CD8-positive, alpha-beta memory T cell (primary cell): ENCODE measurements at regions of chr2 and their contacts with region 1.

Region 1: DNA sequence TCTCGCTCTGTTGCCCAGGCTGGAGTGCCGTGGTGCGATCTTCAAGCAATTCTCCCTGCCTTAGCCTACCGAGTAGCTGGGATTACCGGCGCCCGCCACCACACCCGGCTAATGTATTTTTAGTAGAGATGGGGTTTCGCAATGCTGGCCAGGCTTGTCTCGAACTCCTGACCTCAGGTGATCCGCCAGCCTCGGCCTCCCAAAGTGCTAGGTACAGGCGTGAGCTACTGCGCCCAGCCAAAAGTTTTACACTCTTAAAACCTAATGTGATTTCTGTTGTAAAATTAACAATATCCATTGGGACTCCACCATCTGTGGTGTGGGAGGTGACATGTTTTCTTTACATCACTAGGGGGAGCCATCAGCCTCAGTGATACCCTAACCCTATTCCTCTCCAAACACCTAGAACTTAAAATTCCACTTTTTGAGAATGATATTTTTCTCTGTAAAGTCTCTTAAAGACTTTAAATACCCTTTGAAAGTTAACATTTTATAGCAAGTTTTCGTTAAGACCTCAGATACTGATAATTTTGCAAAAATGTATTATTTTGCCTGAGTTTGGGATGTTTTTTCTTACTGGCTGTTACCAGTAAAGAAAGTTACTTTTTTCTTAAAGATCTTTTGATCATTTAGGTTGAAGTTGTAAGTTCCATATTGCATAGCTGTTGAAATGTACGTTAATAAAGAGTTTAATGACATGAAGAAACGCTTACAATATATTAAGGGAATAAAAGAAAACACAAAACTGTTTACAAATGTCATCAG is 11.6 kb upstream of the EIF2AK2 start:
- DNase-seq: peak in 2 of 5 donors; percentile 31 to 33
- H3K4me3 ChIP-seq: no peak overlapping the region
- H3K4me3 Mint-ChIP-seq: no peak overlapping the region
- H3K27ac ChIP-seq: no peak overlapping the region
- H3K27ac Mint-ChIP-seq: peak overlapping the region in 1 of 8 donors; percentile 77
- H3K4me1 ChIP-seq: no peaks in the 10 kb centered on the region
- H3K4me1 Mint-ChIP-seq: peaks cover 0 to 3% (median 0%) of the 10 kb centered on the region in 3 donors
- H3K27me3 ChIP-seq: no peaks in the 10 kb centered on the region
- H3K27me3 Mint-ChIP-seq: peaks cover 3 to 8% of the 10 kb centered on the region in 2 donors

Region 2: DNA sequence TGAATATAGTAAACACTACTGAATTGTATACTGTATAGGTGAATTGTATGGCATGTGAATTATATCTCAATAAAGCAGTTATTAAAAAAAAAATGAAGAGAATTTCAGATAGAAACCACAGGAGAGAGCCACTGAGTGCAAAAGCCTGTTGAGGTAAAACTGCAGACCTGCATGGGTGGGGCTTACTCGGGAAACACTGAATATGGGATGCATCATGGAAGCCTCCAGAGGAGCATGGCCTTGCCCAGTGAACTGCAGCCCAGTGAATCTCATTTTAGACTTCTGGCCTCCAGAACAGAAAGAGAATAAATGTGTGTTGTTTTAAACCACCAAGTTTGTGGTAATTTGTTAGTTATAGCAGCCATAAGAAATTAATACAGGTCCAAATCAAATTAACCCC is 68.3 kb before region 1 on chr2:
- CTCF ChIA-PET with region 1: no interaction called
- POLR2A ChIA-PET with region 1: no interaction called
- DNase-seq: no peak
- H3K4me3 ChIP-seq: no peak overlapping the region
- H3K4me3 Mint-ChIP-seq: no peak overlapping the region
- H3K27ac ChIP-seq: no peak overlapping the region
- H3K27ac Mint-ChIP-seq: peak overlapping the region in 4 of 8 donors; percentile 4 to 66 (median 42)
- H3K4me1 ChIP-seq: no peaks in the 10 kb centered on the region
- H3K4me1 Mint-ChIP-seq: no peaks in the 10 kb centered on the region
- H3K27me3 ChIP-seq: no peaks in the 10 kb centered on the region
- H3K27me3 Mint-ChIP-seq: no peaks in the 10 kb centered on the region

Region 3: GRCh38 chr2:37146062-37146461 is 22.3 kb before region 1 on chr2:
- CTCF ChIA-PET with region 1: no interaction called
- POLR2A ChIA-PET with region 1: no interaction called
- DNase-seq: no peak
- H3K4me3 ChIP-seq: no peak overlapping the region
- H3K4me3 Mint-ChIP-seq: no peak overlapping the region
- H3K27ac ChIP-seq: no peak overlapping the region
- H3K27ac Mint-ChIP-seq: no peak overlapping the region
- H3K4me1 ChIP-seq: no peaks in the 10 kb centered on the region
- H3K4me1 Mint-ChIP-seq: peaks cover 22 to 25% (median 24%) of the 10 kb centered on the region in 3 donors
- H3K27me3 ChIP-seq: no peaks in the 10 kb centered on the region
- H3K27me3 Mint-ChIP-seq: no peaks in the 10 kb centered on the region

Region 4: DNA sequence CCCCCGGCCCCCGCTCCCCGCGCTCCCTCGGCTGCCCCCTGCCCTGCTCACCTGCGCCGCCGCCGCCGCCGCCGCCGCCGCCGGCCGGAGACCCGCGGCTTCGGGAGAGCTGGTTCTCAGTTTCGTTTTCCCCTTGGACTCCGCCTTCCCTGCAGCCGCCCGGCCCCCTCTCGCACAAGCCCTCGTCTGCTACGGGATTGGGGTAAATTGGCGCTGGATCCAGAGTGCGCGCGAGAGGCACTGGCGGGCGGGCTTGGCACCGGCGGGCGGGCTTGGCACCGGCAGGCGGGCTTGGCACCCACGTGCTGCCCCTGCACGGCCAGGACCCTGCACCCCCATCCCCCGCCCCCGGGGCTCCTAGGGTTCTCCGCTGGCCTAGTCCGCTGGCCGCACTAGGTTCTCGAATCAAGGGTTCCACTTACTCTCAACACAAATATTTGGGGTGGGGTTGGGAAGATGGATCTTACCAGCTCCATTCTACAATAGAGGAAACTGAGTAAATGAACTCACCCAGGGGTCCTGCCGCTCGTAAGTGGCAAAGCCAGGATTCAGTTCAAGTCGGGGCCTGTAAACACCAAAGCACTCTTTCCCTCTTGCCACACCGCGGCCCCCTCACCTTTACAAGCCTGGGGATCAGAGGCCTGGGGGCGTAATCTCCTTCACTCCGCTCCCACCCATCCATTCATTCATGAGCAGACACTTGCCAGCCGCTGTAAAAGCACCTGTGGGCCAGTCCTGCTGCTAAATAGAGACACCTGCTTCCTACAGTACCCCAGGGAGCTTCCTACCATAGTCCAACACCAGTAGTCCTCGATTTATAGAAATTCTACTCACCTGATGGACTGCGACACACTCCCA is 11.3 kb before region 1 on chr2 and contains the start of gene EIF2AK2:
- CTCF ChIA-PET with region 1: interaction called, 26 read pairs
- POLR2A ChIA-PET with region 1: interaction called, 8 read pairs
- DNase-seq: peak; percentile 79 to 91 (median 86)
- H3K4me3 ChIP-seq: peak within 1 kb of the TSS; percentile 90
- H3K4me3 Mint-ChIP-seq: peak within 1 kb of the TSS; percentile 90 to 98 (median 95)
- H3K27ac ChIP-seq: peak within 1 kb of the TSS; percentile 78
- H3K27ac Mint-ChIP-seq: peak within 1 kb of the TSS; percentile 92 to 98 (median 95)
- H3K4me1 ChIP-seq: peaks cover 22% of the 10 kb centered on the region
- H3K4me1 Mint-ChIP-seq: peaks cover 48 to 79% (median 50%) of the 10 kb centered on the region in 3 donors
- H3K27me3 ChIP-seq: no peaks in the 10 kb centered on the region
- H3K27me3 Mint-ChIP-seq: no peaks in the 10 kb centered on the region
- total RNA-seq, gene EIF2AK2: 36.0 to 39.8 TPM

Region 5: DNA sequence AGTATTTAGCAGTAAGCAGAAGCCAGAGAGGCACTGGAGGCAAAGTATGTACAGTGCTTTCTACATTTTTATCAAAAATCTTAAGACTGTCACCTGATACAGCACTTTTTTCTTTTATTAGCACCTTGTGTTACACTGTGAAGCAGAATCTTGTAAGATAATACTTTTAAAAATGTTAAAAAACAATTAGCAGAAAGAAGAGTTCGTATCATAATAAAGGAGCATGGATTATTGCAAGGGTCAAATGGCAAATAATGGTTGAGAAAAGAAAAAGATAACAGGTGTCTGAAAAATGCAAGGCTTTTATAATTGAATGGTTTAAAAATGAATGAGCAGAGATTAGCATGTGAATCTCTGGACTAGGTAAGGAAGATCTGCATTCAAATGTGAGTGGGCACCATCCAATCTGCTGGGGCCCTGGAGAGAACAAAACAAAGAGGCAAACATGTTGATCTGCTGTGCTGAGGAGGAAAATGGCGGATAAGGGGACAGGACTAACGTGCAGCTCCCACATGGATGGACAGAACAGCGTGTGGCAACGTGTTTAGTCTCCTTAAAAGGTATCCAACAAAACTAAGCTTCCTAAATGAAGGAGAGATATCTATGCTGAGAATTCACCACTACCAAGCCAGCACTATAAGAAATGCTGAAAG is 37.4 kb after region 1 on chr2:
- CTCF ChIA-PET with region 1: no interaction called
- POLR2A ChIA-PET with region 1: no interaction called
- DNase-seq: no peak
- H3K4me3 ChIP-seq: no peak overlapping the region
- H3K4me3 Mint-ChIP-seq: no peak overlapping the region
- H3K27ac ChIP-seq: no peak overlapping the region
- H3K27ac Mint-ChIP-seq: no peak overlapping the region
- H3K4me1 ChIP-seq: peaks cover 4% of the 10 kb centered on the region
- H3K4me1 Mint-ChIP-seq: peaks cover 34 to 65% (median 36%) of the 10 kb centered on the region in 3 donors
- H3K27me3 ChIP-seq: no peaks in the 10 kb centered on the region
- H3K27me3 Mint-ChIP-seq: no peaks in the 10 kb centered on the region

Region 6: DNA sequence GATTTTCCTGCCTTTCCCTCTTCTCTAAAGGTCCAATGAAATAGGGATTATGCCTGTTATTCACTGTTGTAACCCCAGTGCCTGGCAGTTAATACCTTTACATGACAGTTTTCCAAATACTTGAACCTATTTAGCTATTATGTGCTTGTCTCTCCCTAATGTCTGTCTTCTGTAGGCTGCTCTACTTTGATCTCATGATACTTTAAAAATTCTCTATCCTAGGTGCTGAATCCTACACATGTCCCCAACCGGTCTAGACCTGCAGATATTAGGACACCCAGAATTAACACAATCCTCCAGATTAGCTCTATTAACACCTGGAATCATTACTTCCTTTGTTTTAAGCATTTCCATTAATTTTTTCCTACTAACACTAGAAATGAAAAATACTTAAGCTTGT is 55.7 kb after region 1 on chr2:
- CTCF ChIA-PET with region 1: no interaction called
- POLR2A ChIA-PET with region 1: no interaction called
- DNase-seq: no peak
- H3K4me3 ChIP-seq: no peak overlapping the region
- H3K4me3 Mint-ChIP-seq: no peak overlapping the region
- H3K27ac ChIP-seq: no peak overlapping the region
- H3K27ac Mint-ChIP-seq: peak overlapping the region in 1 of 8 donors; percentile 22
- H3K4me1 ChIP-seq: peaks cover 25% of the 10 kb centered on the region
- H3K4me1 Mint-ChIP-seq: peaks cover 41 to 67% (median 44%) of the 10 kb centered on the region in 3 donors
- H3K27me3 ChIP-seq: no peaks in the 10 kb centered on the region
- H3K27me3 Mint-ChIP-seq: no peaks in the 10 kb centered on the region

Region 7: GRCh38 chr2:37436323-37436722 is 267.9 kb after region 1 on chr2:
- CTCF ChIA-PET with region 1: no interaction called
- POLR2A ChIA-PET with region 1: interaction called, 14 read pairs
- DNase-seq: no peak
- H3K4me3 ChIP-seq: no peak overlapping the region
- H3K4me3 Mint-ChIP-seq: no peak overlapping the region
- H3K27ac ChIP-seq: no peak overlapping the region
- H3K27ac Mint-ChIP-seq: no peak overlapping the region
- H3K4me1 ChIP-seq: no peaks in the 10 kb centered on the region
- H3K4me1 Mint-ChIP-seq: no peaks in the 10 kb centered on the region
- H3K27me3 ChIP-seq: no peaks in the 10 kb centered on the region
- H3K27me3 Mint-ChIP-seq: peaks cover 2 to 31% of the 10 kb centered on the region in 2 donors